ENCODE measurements at regions of chr12 and their contacts with region 1.

Region 1: DNA sequence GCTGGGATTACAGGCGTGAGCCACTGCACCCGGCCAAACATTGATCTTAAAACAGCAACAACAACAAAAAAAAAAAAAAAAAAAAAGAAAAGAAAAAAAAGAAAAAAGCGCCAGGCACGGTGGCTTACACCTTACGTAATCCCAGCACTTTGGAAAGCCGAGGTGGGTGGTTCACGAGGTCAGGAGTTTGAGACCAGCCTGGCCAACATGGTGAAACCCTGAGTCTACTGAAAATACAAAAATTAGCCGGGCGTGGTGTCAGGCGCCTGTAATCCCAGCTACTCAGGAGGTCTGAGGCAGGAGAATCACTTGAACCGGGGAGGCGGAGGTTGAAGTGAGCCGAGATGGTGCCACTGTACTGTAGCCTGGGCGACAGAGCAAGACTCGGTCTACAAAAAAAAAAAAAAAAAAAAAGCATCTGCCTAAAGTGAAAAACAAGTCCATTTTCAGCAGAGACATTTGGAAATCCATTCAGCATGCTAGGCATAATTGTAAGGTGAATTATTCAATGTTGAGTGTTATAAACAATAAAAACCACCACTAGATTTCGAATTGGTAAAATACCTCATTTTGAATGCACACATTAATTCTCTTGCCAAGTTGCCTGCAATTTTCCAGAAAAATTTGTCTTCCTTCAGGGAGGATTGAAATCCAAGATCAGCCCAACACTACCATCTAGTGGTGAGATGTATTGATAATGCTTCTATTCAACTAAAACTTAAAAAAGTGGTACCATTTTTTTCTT is 8.0 kb upstream of the CERS5 start:
- DNase-seq: no peak
- ATAC-seq: no peak
- H3K4me3 Mint-ChIP-seq: no peak overlapping the region
- H3K27ac Mint-ChIP-seq: no peak overlapping the region
- H3K4me1 Mint-ChIP-seq: no peaks in the 10 kb centered on the region
- H3K27me3 Mint-ChIP-seq: no peaks in the 10 kb centered on the region
- CTCF ChIP-seq: peak; percentile 91

Region 2: DNA sequence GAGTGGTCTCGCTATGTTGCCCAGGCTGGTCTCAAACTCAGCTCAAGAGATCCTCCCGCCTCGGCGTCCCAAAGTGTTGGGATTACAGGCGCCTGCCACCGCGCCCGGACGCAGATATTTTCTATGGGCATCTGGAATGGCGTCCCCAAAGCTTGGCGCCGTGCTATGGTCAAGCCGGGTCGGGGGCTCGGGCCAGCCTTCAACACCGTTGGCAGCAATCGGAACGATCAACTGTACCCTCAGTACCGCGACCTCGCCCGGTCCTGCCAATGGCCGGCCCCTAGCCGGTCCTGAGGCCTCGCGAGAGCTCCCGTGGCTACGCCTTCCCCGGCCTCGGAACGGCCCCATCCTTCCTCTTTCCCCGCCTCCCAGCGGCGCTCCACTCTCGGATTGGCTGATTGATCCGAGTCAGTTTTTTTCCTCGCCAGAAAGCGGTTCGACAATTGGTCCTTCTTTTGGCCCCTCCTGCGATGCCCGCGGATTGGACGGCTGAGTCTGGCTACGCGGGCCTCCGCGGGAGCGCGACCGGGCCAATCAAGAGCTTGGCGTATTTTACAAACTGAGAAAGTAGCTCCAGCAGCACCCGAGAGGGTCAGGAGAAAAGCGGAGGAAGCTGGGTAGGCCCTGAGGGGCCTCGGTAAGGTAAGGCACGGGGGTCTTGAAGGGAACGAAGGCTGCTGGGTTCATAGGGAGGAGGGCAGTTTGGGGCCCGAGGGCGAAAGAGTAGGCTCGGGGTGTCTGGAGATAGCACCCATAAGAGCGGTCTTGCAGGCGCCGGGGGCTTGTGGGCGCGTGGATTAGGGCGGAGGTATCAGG is 852.2 kb before region 1 on chr12 and contains the start of gene TROAP:
- CTCF ChIA-PET with region 1: no interaction called
- POLR2A ChIA-PET with region 1: interaction called, 10 read pairs
- intact Hi-C with region 1: no loop called
- DNase-seq: peak; percentile 85
- ATAC-seq: peak; percentile 99
- H3K4me3 Mint-ChIP-seq: peak within 1 kb of the TSS; percentile 94
- H3K27ac Mint-ChIP-seq: peak within 1 kb of the TSS; percentile 73
- H3K4me1 Mint-ChIP-seq: peaks cover 18% of the 10 kb centered on the region
- H3K27me3 Mint-ChIP-seq: no peaks in the 10 kb centered on the region
- CTCF ChIP-seq: no peak
- total RNA-seq, gene TROAP: 2.0 and 3.1 TPM in 2 replicates

Region 3: GRCh38 chr12:49967042-49967776 is 207.9 kb before region 1 on chr12:
- CTCF ChIA-PET with region 1: interaction called, 5 read pairs
- POLR2A ChIA-PET with region 1: no interaction called
- intact Hi-C with region 1: loop called (anchors 5 kb)
- DNase-seq: peak; percentile 86
- ATAC-seq: peak; percentile 89
- H3K4me3 Mint-ChIP-seq: peak overlapping the region; percentile 71
- H3K27ac Mint-ChIP-seq: no peak overlapping the region
- H3K4me1 Mint-ChIP-seq: peaks cover 4% of the 10 kb centered on the region
- H3K27me3 Mint-ChIP-seq: peaks cover 39% of the 10 kb centered on the region
- CTCF ChIP-seq: peak; percentile 51

Region 4: DNA sequence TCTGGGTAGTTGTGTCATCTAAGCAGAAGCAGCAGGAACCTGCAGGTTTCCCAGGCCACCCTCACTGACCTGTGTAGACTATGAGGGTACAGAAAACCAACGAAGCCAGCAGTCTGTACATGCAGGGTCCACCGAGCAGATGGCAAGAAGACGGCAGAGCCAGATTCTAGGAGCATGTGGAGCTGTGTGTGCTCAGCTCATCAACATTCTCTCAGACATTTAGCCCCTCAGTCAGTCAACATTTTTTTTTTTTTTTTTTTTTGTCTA is 125.1 kb before region 1 on chr12:
- CTCF ChIA-PET with region 1: no interaction called
- POLR2A ChIA-PET with region 1: no interaction called
- intact Hi-C with region 1: no loop called
- DNase-seq: no peak
- ATAC-seq: no peak
- H3K4me3 Mint-ChIP-seq: no peak overlapping the region
- H3K27ac Mint-ChIP-seq: no peak overlapping the region
- H3K4me1 Mint-ChIP-seq: no peaks in the 10 kb centered on the region
- H3K27me3 Mint-ChIP-seq: peaks cover 32% of the 10 kb centered on the region
- CTCF ChIP-seq: no peak

Region 5: DNA sequence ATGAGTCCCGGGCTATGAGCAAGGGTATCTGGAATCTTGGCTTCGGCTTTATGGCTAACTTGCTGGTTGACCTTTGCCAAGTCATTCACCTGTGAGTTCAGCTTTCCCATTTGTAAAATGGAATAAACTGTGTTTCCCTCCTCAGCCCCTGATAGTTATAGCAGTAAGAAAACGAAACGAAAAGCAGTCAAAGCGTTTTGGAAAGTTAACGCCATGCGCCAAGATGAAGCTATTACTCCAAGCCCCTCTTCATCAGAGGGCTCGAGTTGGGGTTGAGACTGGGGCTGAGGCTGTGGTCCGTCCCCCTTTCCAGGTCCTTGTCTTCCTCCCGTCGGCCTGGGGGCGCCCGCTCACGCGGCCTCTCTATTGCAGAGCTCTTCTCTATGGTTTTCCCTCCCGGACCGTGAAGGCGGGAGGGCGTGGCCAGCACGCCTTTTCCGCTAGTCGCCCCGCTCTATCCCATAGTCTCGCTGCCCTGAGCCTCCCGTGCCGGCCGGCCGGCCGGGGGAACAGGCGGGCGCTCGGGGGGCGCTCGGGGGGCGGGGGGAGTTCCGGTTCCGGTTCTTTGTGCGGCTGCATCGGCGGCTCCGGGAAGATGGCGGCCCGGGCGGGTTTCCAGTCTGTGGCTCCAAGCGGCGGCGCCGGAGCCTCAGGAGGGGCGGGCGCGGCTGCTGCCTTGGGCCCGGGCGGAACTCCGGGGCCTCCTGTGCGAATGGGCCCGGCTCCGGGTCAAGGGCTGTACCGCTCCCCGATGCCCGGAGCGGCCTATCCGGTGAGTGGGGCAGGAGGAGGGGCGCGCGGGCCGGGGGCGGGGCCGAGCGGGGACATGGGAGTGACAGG is 90.1 kb before region 1 on chr12 and contains the start of gene SMARCD1:
- CTCF ChIA-PET with region 1: interaction called, 17 read pairs
- POLR2A ChIA-PET with region 1: interaction called, 4 read pairs
- intact Hi-C with region 1: loop called (anchors 1 kb)
- DNase-seq: peak; percentile 82
- ATAC-seq: peak; percentile 86
- H3K4me3 Mint-ChIP-seq: peak within 1 kb of the TSS; percentile 94
- H3K27ac Mint-ChIP-seq: peak within 1 kb of the TSS; percentile 97
- H3K4me1 Mint-ChIP-seq: peaks cover 35% of the 10 kb centered on the region
- H3K27me3 Mint-ChIP-seq: no peaks in the 10 kb centered on the region
- CTCF ChIP-seq: no peak
- total RNA-seq, gene SMARCD1: 101 and 108 TPM in 2 replicates

Region 6: DNA sequence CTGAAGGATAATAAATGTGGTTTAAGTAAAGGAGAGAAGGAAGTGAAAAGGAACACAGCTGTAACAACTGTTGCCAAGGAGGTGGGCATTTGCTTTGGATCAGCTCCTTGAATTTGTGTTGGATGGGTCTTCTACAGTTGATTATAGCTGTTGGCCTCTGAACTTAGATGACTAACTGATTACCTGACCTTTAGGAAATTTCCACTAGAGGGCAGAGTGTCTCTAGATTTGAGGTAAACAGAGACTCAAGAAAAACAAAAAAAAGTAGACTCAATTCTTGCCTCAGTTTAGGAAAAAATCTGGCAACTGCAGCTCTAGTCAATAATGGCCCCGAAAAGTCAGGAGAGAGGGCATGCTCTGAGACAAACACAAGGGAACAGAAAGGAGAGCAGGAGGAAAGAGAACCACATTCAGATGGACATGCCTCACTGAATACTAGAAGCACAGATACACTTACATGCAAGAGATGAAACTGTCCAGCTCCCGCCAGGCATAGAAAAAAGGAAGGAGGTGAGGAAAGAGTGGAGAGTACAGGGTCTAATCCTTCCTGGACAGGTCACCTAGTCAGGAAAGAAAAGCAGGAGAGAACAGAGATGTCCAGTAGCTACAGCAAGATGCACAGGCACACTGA is 42.5 kb before region 1 on chr12:
- CTCF ChIA-PET with region 1: interaction called, 14 read pairs
- POLR2A ChIA-PET with region 1: interaction called, 4 read pairs
- intact Hi-C with region 1: loop called (anchors 1 kb)
- DNase-seq: no peak
- ATAC-seq: no peak
- H3K4me3 Mint-ChIP-seq: no peak overlapping the region
- H3K27ac Mint-ChIP-seq: peak overlapping the region; percentile 7
- H3K4me1 Mint-ChIP-seq: peaks cover 15% of the 10 kb centered on the region
- H3K27me3 Mint-ChIP-seq: no peaks in the 10 kb centered on the region
- CTCF ChIP-seq: no peak

Region 7: DNA sequence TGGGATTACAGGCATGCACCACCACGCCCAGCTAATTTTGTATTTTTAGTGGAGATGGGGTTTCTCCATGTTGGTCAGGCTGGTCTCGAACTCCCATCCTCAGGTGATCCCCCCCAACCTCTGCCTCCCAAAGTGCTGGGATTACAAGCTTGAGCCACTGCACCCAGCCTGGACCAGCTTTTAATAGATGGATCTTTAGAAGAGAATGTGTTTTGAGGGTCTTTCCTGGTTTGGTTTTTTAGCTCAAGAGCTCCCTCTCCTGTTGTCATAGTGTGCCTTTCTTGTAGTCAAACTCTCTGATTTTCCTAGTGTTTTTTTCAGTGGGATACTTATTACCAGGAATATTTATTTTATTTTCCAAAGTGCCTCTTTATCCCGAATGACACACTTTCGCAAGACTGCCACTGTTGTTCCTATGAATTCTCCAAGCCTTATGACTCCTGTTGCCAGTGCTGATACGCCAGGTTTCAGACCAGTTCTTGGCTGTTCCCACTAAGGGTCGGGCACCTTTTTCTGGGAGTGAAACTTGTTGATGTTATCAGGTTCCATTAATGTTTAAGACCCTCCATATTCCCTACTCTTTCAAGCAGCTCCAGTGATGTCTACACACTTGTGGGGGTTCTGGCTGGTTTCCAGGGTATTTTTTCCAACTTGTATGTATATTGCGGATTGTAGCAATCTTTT is 139.6 kb after region 1 on chr12:
- CTCF ChIA-PET with region 1: interaction called, 5 read pairs
- POLR2A ChIA-PET with region 1: no interaction called
- intact Hi-C with region 1: loop called (anchors 5 kb)
- DNase-seq: no peak
- ATAC-seq: no peak
- H3K4me3 Mint-ChIP-seq: no peak overlapping the region
- H3K27ac Mint-ChIP-seq: no peak overlapping the region
- H3K4me1 Mint-ChIP-seq: no peaks in the 10 kb centered on the region
- H3K27me3 Mint-ChIP-seq: no peaks in the 10 kb centered on the region
- CTCF ChIP-seq: no peak